ENCODE measurements at regions of chr1 and their contacts with region 1.

Region 1: GRCh38 chr1:160675641-160676410 is 29.0 kb upstream of the SLAMF1 start:
- DNase-seq: peak; percentile 68
- H3K4me3 Mint-ChIP-seq: peak overlapping the region; percentile 19
- H3K27ac Mint-ChIP-seq: peak overlapping the region; percentile 42
- H3K4me1 Mint-ChIP-seq: peaks cover 47% of the 10 kb centered on the region
- H3K27me3 Mint-ChIP-seq: no peaks in the 10 kb centered on the region

Region 2: GRCh38 chr1:160428655-160429054 is 247.2 kb before region 1 on chr1:
- intact Hi-C with region 1: loop called (anchors 2 kb)
- DNase-seq: peak; percentile 15
- H3K4me3 Mint-ChIP-seq: no peak overlapping the region
- H3K27ac Mint-ChIP-seq: peak overlapping the region; percentile 91
- H3K4me1 Mint-ChIP-seq: peaks cover 59% of the 10 kb centered on the region
- H3K27me3 Mint-ChIP-seq: no peaks in the 10 kb centered on the region

Region 3: GRCh38 chr1:160629286-160630210 is 46.3 kb before region 1 on chr1:
- intact Hi-C with region 1: loop called (anchors 2 kb)
- DNase-seq: peak; percentile 76
- H3K4me3 Mint-ChIP-seq: peak overlapping the region; percentile 69
- H3K27ac Mint-ChIP-seq: peak overlapping the region; percentile 99
- H3K4me1 Mint-ChIP-seq: peaks cover 98% of the 10 kb centered on the region
- H3K27me3 Mint-ChIP-seq: no peaks in the 10 kb centered on the region

Region 4: GRCh38 chr1:160646711-160647328 is 29.0 kb before region 1 on chr1 and contains the start of gene SLAMF1:
- intact Hi-C with region 1: loop called (anchors 1 kb)
- DNase-seq: no peak
- H3K4me3 Mint-ChIP-seq: peak within 1 kb of the TSS; percentile 98
- H3K27ac Mint-ChIP-seq: peak within 1 kb of the TSS; percentile 96
- H3K4me1 Mint-ChIP-seq: peaks cover 65% of the 10 kb centered on the region
- H3K27me3 Mint-ChIP-seq: no peaks in the 10 kb centered on the region
- total RNA-seq, gene SLAMF1: 118 TPM in 2 replicates

Region 5: DNA sequence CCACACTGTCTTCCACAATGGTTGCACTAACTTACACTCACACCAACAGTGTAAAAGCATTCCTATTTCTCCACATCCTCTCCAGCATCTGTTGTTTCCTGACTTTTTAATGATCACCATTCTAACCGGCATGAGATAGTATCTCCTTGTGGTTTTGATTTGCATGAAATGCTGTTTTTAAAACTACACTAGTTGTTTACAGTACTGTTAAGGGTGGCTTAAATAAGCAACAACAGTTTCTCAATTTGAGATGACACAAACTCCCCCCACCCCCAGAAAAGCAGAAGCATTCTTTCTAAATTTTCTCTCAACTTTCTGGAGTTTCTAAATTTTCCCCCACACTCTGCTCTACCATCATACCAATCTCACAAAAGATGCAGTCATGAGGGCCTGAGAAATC is 56.2 kb after region 1 on chr1:
- intact Hi-C with region 1: no loop called
- DNase-seq: no peak
- H3K4me3 Mint-ChIP-seq: no peak overlapping the region
- H3K27ac Mint-ChIP-seq: peak overlapping the region; percentile 78
- H3K4me1 Mint-ChIP-seq: peaks cover 38% of the 10 kb centered on the region
- H3K27me3 Mint-ChIP-seq: no peaks in the 10 kb centered on the region

Region 6: DNA sequence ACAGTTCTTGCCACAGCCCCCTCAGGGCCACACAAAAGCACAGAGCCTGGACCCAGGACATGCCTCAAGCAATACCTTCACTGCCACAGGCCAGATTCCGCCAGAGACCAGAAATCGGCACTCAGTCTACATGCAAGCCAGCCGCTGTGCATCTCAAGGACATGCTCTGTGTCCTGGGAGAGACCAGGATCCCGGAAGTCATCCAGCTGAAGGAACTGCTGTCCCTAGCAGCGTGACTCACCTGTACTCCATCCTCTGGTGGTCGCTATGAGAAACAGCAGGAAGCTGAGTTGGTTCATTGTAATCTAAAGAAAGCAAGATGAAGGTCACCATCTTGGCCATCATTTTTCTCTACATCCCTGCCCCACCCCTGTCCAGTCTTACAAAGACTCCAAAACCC is 208.8 kb after region 1 on chr1:
- intact Hi-C with region 1: loop called (anchors 5 kb)
- DNase-seq: no peak
- H3K4me3 Mint-ChIP-seq: no peak overlapping the region
- H3K27ac Mint-ChIP-seq: no peak overlapping the region
- H3K4me1 Mint-ChIP-seq: peaks cover 7% of the 10 kb centered on the region
- H3K27me3 Mint-ChIP-seq: peaks cover 11% of the 10 kb centered on the region

Region 7: DNA sequence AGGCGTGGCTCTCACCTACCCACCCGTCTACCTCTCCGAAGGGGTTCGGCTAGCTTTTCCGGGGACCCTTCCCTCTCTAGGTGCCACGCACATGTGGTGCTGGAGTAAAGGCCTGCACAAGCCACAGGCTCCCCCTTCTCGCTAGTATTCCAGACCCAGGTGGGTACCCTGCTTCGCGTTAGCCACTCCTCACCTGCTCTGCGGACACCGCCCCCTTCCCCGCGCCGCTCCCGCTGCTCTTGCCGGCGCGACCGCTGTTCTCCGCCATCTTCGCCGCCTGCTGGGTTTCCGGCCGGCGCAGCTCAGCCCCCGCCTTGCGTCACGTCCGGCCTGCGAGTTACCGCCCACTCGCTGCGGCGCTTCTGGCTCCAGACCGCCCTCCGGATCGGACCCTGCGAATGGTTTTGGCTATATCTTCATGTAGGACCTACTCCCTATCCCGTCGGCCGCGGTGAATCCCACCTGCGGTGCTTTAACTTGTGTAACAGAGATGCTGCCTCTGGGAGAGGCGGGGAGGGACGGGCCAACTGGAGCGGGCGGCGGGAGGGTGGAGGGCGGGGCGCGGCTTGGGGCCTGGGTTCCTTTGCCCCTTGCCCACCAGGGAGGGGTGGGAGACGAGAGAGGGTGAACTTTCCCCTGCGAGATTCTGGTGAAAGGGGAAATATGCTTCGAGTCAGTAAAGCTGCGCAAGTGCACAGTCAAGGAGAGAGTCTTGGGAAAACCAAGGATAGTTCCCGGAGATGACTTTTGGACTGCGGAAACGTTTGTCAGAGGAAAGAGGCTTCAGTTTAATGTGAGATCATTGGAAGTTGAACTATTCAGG is 442.1 kb after region 1 on chr1 and contains the starts of genes NIT1 and PFDN2:
- intact Hi-C with region 1: no loop called
- DNase-seq: peak; percentile 84
- H3K4me3 Mint-ChIP-seq: peak within 1 kb of the TSS; percentile 97
- H3K27ac Mint-ChIP-seq: peak within 1 kb of the TSS; percentile 96
- H3K4me1 Mint-ChIP-seq: peaks cover 75% of the 10 kb centered on the region
- H3K27me3 Mint-ChIP-seq: no peaks in the 10 kb centered on the region
- total RNA-seq, gene NIT1: 51.3 and 56.3 TPM in 2 replicates
- total RNA-seq, gene PFDN2: 147 and 164 TPM in 2 replicates